ENCODE measurements at regions of chr6 and their contacts with region 1.

Region 1: GRCh38 chr6:5302995-5303622 is 41.8 kb downstream of the FARS2 start:
- DNase-seq: peak; percentile 40
- ATAC-seq: peak; percentile 70
- H3K4me3 Mint-ChIP-seq: peak overlapping the region; percentile 77
- H3K27ac Mint-ChIP-seq: peak overlapping the region; percentile 84
- H3K4me1 Mint-ChIP-seq: peaks cover 40% of the 10 kb centered on the region
- H3K27me3 Mint-ChIP-seq: no peaks in the 10 kb centered on the region
- CTCF ChIP-seq: no peak

Region 2: DNA sequence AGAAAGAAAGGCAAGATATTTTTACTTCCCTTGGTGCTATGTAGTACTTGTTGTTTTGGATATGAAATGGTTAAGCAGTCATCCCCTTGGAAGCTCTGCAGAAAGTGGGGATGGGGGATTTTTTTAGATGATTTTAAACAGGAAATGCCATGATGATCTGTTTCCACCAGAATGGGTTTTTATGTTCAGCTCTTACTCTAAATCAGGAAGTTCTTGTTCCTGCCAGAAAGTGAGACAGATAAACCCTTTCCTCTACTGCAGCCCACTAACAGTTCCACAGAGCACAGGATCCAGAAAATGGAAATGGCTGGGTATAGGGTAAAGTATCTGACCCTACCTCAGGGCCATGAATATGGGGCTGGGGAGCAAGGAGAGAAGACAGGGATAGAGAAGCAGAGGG is 250.1 kb before region 1 on chr6:
- CTCF ChIA-PET with region 1: interaction called, 3 read pairs
- POLR2A ChIA-PET with region 1: no interaction called
- intact Hi-C with region 1: loop called (anchors 1 kb)
- DNase-seq: no peak
- ATAC-seq: no peak
- H3K4me3 Mint-ChIP-seq: no peak overlapping the region
- H3K27ac Mint-ChIP-seq: no peak overlapping the region
- H3K4me1 Mint-ChIP-seq: peaks cover 1% of the 10 kb centered on the region
- H3K27me3 Mint-ChIP-seq: no peaks in the 10 kb centered on the region
- CTCF ChIP-seq: no peak

Region 3: DNA sequence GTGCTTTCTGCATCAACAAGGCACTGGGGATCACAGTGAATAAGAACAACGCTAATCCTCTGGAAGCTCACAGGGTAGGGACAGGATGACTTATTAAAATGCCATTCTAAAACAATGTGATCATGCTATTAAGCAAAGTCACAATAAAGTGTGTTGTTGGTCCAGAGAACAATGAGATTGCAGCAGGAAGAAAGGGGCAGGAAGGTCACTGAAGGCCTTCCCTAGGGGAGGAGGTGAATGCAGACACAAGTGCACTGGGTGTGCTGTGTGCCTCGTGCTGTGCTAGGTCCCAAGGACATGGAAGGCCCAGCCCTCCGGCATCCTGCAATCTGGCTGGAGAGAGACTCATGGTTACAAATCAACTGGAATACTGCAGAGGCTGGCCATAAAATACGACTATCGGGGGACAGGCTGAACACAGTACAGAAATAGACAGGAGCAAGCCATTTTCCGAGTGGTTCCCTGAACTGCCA is 98.0 kb before region 1 on chr6:
- CTCF ChIA-PET with region 1: no interaction called
- POLR2A ChIA-PET with region 1: no interaction called
- intact Hi-C with region 1: no loop called
- DNase-seq: no peak
- ATAC-seq: no peak
- H3K4me3 Mint-ChIP-seq: no peak overlapping the region
- H3K27ac Mint-ChIP-seq: no peak overlapping the region
- H3K4me1 Mint-ChIP-seq: peaks cover 8% of the 10 kb centered on the region
- H3K27me3 Mint-ChIP-seq: no peaks in the 10 kb centered on the region
- CTCF ChIP-seq: no peak

Region 4: GRCh38 chr6:5260661-5261544 is 42.2 kb before region 1 on chr6 and contains the starts of genes FARS2 and LYRM4:
- CTCF ChIA-PET with region 1: interaction called, 13 read pairs
- POLR2A ChIA-PET with region 1: interaction called, 37 read pairs
- intact Hi-C with region 1: loop called (anchors 1 kb)
- DNase-seq: peak; percentile 97
- ATAC-seq: peak; percentile 84
- H3K4me3 Mint-ChIP-seq: peak within 1 kb of the TSS; percentile 98
- H3K27ac Mint-ChIP-seq: peak within 1 kb of the TSS; percentile 100
- H3K4me1 Mint-ChIP-seq: peaks cover 27% of the 10 kb centered on the region
- H3K27me3 Mint-ChIP-seq: no peaks in the 10 kb centered on the region
- CTCF ChIP-seq: no peak
- total RNA-seq, gene FARS2: 28.2 and 32.7 TPM in 2 replicates
- total RNA-seq, gene LYRM4: 51.2 and 52.2 TPM in 2 replicates

Region 5: GRCh38 chr6:5278047-5278446 is 25.1 kb before region 1 on chr6:
- CTCF ChIA-PET with region 1: interaction called, 13 read pairs
- POLR2A ChIA-PET with region 1: interaction called, 29 read pairs
- intact Hi-C with region 1: loop called (anchors 1 kb)
- DNase-seq: no peak
- ATAC-seq: peak; percentile 84
- H3K4me3 Mint-ChIP-seq: peak overlapping the region; percentile 81
- H3K27ac Mint-ChIP-seq: peak overlapping the region; percentile 91
- H3K4me1 Mint-ChIP-seq: peaks cover 57% of the 10 kb centered on the region
- H3K27me3 Mint-ChIP-seq: no peaks in the 10 kb centered on the region
- CTCF ChIP-seq: no peak

Region 6: DNA sequence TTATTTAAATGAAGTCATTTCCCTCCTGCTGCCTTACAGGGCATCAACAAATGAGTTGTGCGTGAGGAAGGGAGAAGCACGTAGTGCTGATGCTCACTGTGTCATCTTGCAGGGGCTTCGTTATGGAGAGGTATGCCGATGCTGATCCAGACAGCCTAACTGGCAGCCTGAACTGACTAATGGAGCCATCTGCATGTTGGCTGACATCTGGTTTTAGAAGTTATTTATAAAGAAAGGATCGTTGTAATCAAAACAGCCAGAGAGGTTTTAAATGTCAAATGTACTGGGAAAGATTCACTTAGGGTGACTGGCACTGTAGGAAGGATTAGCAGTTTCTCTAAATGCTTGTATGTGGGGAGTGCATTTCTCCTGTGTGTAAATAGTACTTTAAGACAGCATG is 12.8 kb after region 1 on chr6:
- CTCF ChIA-PET with region 1: interaction called, 20 read pairs
- POLR2A ChIA-PET with region 1: no interaction called
- intact Hi-C with region 1: no loop called
- DNase-seq: no peak
- ATAC-seq: no peak
- H3K4me3 Mint-ChIP-seq: no peak overlapping the region
- H3K27ac Mint-ChIP-seq: no peak overlapping the region
- H3K4me1 Mint-ChIP-seq: peaks cover 49% of the 10 kb centered on the region
- H3K27me3 Mint-ChIP-seq: no peaks in the 10 kb centered on the region
- CTCF ChIP-seq: no peak

Region 7: DNA sequence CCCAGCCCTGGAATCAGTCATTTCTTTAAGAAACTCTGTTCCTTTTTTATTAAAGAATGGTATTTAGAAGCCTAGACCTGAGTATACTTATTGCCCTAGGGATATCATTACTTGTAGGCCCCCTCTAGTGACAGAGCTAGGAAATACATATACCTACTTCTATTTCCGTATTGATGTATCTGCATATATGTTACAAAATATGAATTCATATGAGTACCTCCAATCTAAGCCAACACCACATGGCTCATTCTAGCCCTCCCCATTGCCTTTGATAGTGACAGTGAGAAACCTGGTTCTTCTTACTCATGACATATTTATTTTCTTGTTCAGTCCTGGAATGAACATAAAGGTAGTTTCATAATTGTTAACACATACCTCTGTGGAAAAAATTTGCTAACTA is 95.4 kb after region 1 on chr6:
- CTCF ChIA-PET with region 1: interaction called, 9 read pairs
- POLR2A ChIA-PET with region 1: no interaction called
- intact Hi-C with region 1: loop called (anchors 1 kb)
- DNase-seq: no peak
- ATAC-seq: peak; percentile 87
- H3K4me3 Mint-ChIP-seq: no peak overlapping the region
- H3K27ac Mint-ChIP-seq: no peak overlapping the region
- H3K4me1 Mint-ChIP-seq: peaks cover 2% of the 10 kb centered on the region
- H3K27me3 Mint-ChIP-seq: no peaks in the 10 kb centered on the region
- CTCF ChIP-seq: no peak

Measured in activated B cell treated with CpG ODN at 0.5 μM for 24 hours (primary cell).